Activated naive CD8-positive, alpha-beta T cell treated with anti-CD3 and anti-CD28 coated beads, Interleukin-2, amount 10 ng/mL, durations not matched to agents 7 days and 5 days (primary cell): ENCODE measurements at regions of chr1 and their contacts with region 1.

Region 1: DNA sequence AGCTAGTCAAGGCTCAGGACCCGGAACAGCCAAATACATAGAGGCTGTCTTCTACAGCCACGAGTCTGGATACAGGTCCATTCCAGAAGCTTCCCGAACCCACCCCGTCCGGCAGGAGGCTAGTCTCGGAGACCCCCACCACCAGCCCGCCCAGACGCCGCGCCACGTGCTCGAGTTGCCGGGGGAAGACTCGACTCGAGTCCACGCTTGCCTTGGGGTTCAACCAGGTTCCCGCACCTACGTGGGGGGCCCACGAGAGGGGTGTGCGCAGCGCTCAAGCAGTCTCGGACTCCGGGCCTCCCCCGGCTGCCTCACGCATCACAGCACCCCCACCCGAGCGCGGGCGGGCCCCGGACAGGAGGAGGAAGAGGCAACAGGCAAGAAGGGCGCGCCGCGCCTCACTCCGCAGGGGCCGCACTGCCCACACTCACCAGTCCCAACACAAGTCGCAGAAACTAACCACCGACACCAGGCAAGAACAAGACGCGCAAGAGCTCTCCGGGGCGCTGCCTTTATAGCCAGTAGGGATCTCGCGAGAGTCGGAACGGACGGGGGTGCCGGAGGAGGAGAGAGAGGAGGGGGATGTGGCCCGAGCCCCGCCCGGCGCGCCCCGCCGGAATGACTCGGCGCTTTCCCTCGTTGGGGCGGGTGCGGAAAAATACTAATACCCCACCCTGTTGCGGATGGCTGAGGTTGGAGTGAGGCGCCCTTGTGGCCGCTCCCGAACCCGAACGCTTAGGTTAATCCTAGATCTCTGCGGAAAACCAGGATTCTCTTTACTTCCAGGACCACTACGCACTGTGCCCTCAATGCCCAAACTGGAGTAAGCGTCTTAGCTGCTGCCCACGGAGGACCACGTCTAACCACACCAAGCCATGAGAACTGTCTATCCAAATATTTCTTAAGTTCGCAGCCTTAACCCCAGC is at the start of gene PRDX1:
- DNase-seq: peak; percentile 96
- ATAC-seq: peak; percentile 84
- H3K4me3 Mint-ChIP-seq: peak within 1 kb of the TSS; percentile 94
- H3K27ac Mint-ChIP-seq: peak within 1 kb of the TSS; percentile 85
- H3K4me1 Mint-ChIP-seq: peaks cover 26% of the 10 kb centered on the region
- H3K27me3 Mint-ChIP-seq: peaks cover 13% of the 10 kb centered on the region
- total RNA-seq, gene PRDX1: 159 to 180 TPM

Region 2: DNA sequence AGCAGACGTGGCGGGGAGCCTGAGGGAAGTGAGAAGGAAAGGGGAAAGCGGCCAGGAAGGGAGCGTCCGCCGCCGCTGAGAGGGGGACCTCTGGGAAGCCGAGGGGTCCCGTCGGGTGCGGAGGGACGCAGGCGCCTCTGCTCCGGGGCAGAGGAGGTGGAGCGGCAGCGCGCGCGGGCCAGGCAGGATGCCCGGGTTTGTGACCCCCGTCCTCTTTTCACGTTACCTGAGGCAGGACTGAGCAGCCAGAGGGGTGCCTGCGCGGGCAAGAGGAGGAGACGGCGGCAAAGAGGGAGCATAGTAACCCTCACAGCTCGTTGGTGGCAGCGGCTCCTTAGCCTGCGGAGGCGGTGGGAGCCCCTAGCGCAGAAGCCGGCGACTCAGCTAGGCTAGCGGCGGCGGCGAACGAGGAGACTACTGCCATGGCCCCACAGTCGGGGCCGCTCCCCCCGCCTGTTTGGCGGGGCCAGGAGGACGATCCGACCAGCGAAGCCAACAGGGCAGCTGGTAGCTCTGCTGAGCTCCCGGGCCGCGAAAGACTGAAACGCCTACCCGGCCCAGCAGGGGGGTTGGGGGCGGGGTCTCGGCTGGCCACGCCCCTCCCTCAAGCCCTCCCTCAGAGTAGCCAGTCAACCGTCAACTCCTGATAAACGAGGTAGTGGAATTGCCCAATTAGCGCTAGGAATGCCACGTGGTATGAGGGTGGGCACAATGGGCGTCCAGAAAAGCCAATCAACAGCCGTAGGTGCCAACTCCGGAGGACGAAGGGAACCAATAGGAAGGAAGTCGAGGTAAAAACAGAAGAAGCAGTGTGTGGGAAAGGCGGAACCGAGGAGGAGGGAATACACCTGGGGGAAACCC is 30.8 kb before region 1 on chr1 and contains the start of gene TESK2:
- POLR2A ChIA-PET with region 1: interaction called, 16 read pairs
- DNase-seq: peak; percentile 96
- ATAC-seq: peak; percentile 94
- H3K4me3 Mint-ChIP-seq: no peak within 1 kb of the TSS
- H3K27ac Mint-ChIP-seq: no peak within 1 kb of the TSS
- H3K4me1 Mint-ChIP-seq: peaks cover 9% of the 10 kb centered on the region
- H3K27me3 Mint-ChIP-seq: no peaks in the 10 kb centered on the region
- total RNA-seq, gene TESK2: 5.8 to 6.5 TPM

Region 3: DNA sequence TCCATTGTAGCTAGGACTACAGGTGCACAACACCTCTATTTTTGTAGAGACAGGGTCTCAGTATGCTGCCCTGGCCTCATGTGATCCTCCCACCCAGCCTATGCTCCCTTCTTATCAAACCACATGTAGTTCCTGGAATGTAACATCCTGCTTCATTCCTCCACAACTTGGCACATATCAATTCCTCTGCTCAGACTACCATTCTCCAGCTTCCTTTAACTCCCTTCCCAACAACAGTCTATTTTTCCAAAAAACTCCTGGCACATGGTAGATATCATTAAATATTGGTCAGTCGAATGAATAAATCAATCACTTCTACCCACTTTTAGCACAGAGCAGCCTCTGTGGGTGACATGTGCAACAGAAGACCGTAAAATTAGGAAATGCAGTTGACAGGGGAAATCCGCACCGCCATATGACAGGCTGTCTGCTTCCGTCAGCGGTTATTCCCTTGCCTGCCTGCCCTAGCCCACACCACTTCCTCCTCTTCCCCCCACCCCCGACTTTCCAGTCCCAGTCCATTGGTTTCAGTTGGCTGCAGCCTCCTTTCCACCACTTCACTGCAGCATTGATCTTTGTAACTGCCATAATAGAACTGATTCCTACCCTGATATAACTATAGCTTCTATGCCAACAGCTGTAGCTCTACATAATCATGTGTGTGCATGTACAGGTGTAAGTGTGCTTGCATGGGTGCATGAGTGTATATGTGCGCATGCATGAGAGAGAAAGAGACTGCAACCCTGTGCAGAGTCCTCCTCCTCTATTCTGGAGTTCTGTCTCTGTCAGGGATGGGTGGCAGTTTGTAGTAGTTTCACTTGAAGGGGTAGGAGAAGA is 22.1 kb after region 1 on chr1:
- POLR2A ChIA-PET with region 1: interaction called, 64 read pairs
- DNase-seq: peak; percentile 45
- ATAC-seq: peak; percentile 87
- H3K4me3 Mint-ChIP-seq: peak overlapping the region; percentile 71
- H3K27ac Mint-ChIP-seq: peak overlapping the region; percentile 32
- H3K4me1 Mint-ChIP-seq: peaks cover 26% of the 10 kb centered on the region
- H3K27me3 Mint-ChIP-seq: peaks cover 22% of the 10 kb centered on the region

Region 4: DNA sequence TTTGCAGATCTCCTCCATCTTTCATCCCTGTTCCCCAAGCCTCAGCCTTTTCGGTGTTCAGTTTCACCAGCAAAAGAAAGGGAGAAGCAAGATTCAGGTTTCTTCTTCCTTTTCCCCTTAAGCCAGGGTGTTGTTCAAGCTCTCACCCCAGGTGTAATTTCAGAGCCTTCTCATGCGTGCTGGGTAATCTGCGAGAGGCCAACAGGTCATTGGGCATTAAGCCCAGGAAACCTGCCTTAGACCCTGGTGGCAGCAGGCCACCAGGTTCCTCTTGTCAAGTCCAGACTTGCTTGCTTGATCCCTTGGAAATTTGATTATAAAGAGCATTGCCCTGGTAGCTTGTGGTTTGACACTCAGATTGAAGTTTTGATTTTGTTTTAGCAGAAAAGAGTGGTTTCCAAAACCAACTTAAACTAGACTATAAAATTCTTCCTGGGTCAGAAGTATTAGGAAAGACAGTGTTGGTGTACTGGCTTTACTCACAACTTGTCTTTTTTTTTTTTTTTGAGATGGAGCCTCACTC is 35.8 kb after region 1 on chr1:
- POLR2A ChIA-PET with region 1: interaction called, 12 read pairs
- DNase-seq: no peak
- ATAC-seq: no peak
- H3K4me3 Mint-ChIP-seq: no peak overlapping the region
- H3K27ac Mint-ChIP-seq: peak overlapping the region; percentile 40
- H3K4me1 Mint-ChIP-seq: peaks cover 15% of the 10 kb centered on the region
- H3K27me3 Mint-ChIP-seq: no peaks in the 10 kb centered on the region

Region 5: GRCh38 chr1:45583264-45583665 is 61.6 kb after region 1 on chr1:
- POLR2A ChIA-PET with region 1: interaction called, 36 read pairs
- DNase-seq: peak; percentile 90
- ATAC-seq: peak; percentile 75
- H3K4me3 Mint-ChIP-seq: peak overlapping the region; percentile 93
- H3K27ac Mint-ChIP-seq: peak overlapping the region; percentile 100
- H3K4me1 Mint-ChIP-seq: peaks cover 23% of the 10 kb centered on the region
- H3K27me3 Mint-ChIP-seq: no peaks in the 10 kb centered on the region